Activated CD4-positive, alpha-beta T cell treated with anti-CD3 and anti-CD28 coated beads, Interleukin-2, amount 10 ng/mL, durations not matched to agents 7 days and 5 days (primary cell): ENCODE measurements at regions of chr14 and their contacts with region 1.

Region 1: GRCh38 chr14:72516936-72517700 is 376.8 kb downstream of the DPF3 start:
- DNase-seq: peak; percentile 87
- H3K4me3 Mint-ChIP-seq: peak overlapping the region; percentile 23
- H3K27ac Mint-ChIP-seq: peak overlapping the region; percentile 94
- H3K4me1 Mint-ChIP-seq: peaks cover 81% of the 10 kb centered on the region
- H3K27me3 Mint-ChIP-seq: no peaks in the 10 kb centered on the region

Region 2: DNA sequence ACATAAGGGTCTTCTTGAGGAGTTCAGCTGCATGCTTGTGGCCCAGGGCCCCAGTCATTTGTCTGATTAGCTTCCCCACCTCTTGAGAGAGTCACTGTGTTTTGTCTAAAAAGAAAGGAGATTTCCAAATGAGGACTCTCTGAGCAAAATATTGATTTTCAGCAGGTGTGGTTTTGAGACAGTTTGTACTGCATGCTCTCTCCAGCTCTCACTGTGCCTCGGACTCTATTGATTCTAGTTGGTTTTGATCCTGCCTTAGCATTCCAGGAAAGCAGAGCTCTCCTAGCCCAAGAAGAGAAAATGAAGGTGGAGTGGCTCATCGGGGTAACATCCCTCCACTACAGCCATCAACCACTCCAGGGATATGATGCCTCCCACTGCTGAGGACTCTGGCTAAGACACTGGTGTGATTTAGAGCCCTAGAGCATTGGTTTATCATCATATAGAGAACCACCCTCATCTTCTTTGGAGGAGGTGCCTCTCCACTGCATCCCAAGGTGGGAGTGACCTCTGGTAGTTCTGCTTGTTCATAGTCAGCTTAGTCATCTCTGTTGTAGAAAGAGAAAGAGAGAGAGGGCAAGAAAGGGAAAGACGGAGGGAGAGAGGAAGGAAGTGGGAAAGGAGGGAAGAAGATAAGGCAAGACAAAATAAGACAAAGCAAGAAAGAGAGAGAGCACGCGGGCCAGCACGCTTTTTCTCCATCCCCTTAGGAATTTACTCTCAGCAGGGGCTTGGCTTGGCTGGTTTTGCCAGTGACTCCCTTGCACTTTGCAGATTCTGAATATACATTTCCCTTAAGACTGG is 11.1 kb after region 1 on chr14:
- CTCF ChIA-PET with region 1: interaction called, 10 read pairs
- POLR2A ChIA-PET with region 1: no interaction called
- DNase-seq: no peak
- H3K4me3 Mint-ChIP-seq: no peak overlapping the region
- H3K27ac Mint-ChIP-seq: no peak overlapping the region
- H3K4me1 Mint-ChIP-seq: peaks cover 79% of the 10 kb centered on the region
- H3K27me3 Mint-ChIP-seq: peaks cover 4% of the 10 kb centered on the region

Region 3: GRCh38 chr14:72699852-72700257 is 182.7 kb after region 1 on chr14:
- CTCF ChIA-PET with region 1: no interaction called
- POLR2A ChIA-PET with region 1: no interaction called
- DNase-seq: no peak
- H3K4me3 Mint-ChIP-seq: no peak overlapping the region
- H3K27ac Mint-ChIP-seq: no peak overlapping the region
- H3K4me1 Mint-ChIP-seq: peaks cover 10% of the 10 kb centered on the region
- H3K27me3 Mint-ChIP-seq: peaks cover 4% of the 10 kb centered on the region

Region 4: GRCh38 chr14:72893636-72894321 is 376.7 kb after region 1 on chr14 and contains the start of gene DPF3:
- CTCF ChIA-PET with region 1: interaction called, 14 read pairs
- POLR2A ChIA-PET with region 1: no interaction called
- DNase-seq: peak; percentile 94
- H3K4me3 Mint-ChIP-seq: peak within 1 kb of the TSS; percentile 92
- H3K27ac Mint-ChIP-seq: peak within 1 kb of the TSS; percentile 82
- H3K4me1 Mint-ChIP-seq: peaks cover 25% of the 10 kb centered on the region
- H3K27me3 Mint-ChIP-seq: peaks cover 68% of the 10 kb centered on the region
- total RNA-seq, gene DPF3: 6.6 to 7.4 TPM

Region 5: GRCh38 chr14:72904840-72905561 is 387.9 kb after region 1 on chr14:
- CTCF ChIA-PET with region 1: interaction called, 83 read pairs
- POLR2A ChIA-PET with region 1: interaction called, 3 read pairs
- DNase-seq: peak; percentile 77
- H3K4me3 Mint-ChIP-seq: no peak overlapping the region
- H3K27ac Mint-ChIP-seq: no peak overlapping the region
- H3K4me1 Mint-ChIP-seq: peaks cover 24% of the 10 kb centered on the region
- H3K27me3 Mint-ChIP-seq: peaks cover 34% of the 10 kb centered on the region

Region 6: DNA sequence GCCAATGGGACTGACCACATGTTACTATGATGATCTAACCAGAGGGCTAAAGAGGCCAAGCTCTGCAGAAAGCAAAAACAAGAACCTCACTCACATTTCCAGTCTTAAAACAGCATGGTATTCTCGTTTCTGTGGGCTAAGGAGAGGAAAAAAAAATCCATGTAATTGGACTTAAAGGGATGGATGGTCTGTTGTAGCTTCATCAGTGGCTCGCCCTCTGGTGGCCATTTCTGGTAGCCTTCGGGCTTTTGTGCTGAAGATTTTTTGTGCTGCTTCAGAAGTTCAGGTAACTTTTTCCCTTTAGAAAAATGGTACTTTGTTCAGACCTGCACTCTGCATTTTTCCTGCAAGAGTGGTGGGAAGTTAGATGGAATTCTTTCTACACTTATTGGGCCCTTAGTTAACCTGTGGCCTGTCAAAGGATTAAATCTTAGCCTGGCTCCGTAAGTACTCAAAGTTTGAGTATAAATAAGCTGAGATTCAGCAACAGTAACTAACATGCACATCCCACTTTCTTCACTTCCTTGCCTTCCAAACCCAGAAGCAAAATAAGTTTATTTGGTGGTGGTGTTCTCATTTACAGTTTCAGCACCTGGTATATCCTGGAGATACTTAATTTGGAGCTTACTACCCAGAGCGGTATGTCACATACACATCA is 431.5 kb after region 1 on chr14:
- CTCF ChIA-PET with region 1: interaction called, 20 read pairs
- POLR2A ChIA-PET with region 1: no interaction called
- DNase-seq: peak; percentile 76
- H3K4me3 Mint-ChIP-seq: no peak overlapping the region
- H3K27ac Mint-ChIP-seq: no peak overlapping the region
- H3K4me1 Mint-ChIP-seq: peaks cover 2% of the 10 kb centered on the region
- H3K27me3 Mint-ChIP-seq: no peaks in the 10 kb centered on the region